ENCODE measurements at regions of chr11 and their contacts with region 1.

Region 1: DNA sequence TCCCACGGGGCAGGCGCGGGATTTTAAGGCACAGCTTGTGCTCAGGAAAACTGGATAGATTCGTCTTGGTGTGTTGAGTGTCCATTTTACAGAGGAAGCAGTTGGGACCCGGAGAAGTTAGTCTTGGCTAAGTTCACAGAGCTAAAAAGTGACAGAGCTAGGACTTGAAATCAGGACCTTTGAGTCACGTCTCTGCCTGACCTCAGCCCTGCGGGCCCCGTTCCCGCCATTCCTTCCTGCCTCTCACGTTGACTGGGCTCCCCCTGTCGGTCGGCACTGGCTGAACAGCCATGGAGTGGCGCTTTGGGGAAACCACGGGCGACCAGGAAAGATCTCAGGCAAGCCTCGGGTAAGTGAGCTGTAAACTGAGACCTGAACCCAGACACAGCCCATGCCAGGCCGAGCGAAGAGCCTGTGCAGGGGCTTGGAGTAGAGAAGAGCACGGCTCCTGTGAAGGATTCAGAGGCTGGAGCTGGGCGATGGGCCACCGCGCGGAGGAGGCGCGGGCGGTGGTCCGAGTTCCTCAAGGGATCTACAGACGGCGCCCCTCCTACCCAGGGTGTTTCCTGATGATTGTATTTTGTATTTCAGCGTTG is 54.1 kb downstream of the WNT11 start:
- DNase-seq: peak; percentile 14
- H3K4me3 ChIP-seq: peak overlapping the region; percentile 12 to 66 (median 38)
- H3K27ac ChIP-seq: no peak overlapping the region
- H3K4me1 ChIP-seq: peaks cover 3 to 16% (median 6%) of the 10 kb centered on the region in 3 donors
- H3K27me3 ChIP-seq: no peaks in the 10 kb centered on the region
- CTCF ChIP-seq: peak; percentile 88 to 96 (median 94)
- POLR2A ChIP-seq: no peak

Region 2: DNA sequence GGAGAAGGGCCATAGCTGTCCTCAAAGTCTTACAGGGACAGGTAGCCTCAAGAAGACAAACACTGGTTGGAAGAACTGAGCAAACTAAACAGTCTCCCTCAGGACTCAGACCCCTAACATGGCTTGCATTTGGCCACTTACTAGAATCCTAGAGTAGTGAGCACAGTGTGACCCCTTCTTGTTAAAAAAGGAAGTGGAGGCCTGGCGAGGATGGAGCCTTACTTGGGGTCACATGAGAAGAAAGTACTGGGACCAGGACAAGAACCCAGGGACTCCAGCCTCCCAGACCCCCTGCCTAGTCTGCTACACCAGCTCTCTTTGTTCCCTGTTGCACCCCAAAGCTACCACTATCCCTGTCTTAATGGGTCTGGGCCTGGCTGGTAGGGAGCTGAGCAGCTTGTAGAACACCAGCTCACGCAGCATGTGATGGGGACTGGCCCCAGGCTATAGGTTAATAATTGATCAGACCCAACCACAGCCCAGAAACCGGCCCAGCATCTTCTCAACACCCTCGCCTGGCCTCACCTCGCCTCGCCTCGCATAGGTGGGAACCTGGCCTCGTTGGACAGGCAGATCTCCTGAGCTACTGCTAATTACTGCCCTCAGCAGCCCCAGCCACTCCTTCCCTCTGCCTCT is 366.0 kb before region 1 on chr11:
- intact Hi-C with region 1: no loop called
- DNase-seq: no peak
- H3K4me3 ChIP-seq: no peak overlapping the region
- H3K27ac ChIP-seq: no peak overlapping the region
- H3K4me1 ChIP-seq: peaks cover 0 to 5% (median 0%) of the 10 kb centered on the region in 3 donors
- H3K27me3 ChIP-seq: no peaks in the 10 kb centered on the region
- CTCF ChIP-seq: no peak
- POLR2A ChIP-seq: no peak

Region 3: DNA sequence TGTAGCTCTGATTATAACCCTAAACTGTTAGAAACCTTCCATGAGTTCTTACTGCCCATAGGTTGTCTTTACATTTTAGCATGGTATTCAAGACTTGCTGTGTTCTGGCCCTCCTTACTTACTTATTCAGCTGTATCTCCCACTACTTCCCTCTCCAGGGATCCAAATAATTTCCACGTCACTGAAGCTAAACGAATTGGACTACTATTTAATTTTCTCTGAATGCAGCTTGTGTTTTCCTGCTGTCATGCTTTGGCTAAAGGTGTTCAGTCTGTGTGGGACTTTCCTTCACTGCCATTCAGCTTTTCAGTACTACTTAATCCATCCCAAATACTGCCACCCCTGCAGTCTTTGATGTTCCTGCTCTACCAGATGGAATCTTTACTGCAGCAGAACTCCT is 248.9 kb before region 1 on chr11:
- intact Hi-C with region 1: loop called (anchors 5 kb)
- DNase-seq: no peak
- H3K4me3 ChIP-seq: no peak overlapping the region
- H3K27ac ChIP-seq: no peak overlapping the region
- H3K4me1 ChIP-seq: peaks cover 0 to 6% (median 6%) of the 10 kb centered on the region in 3 donors
- H3K27me3 ChIP-seq: no peaks in the 10 kb centered on the region
- CTCF ChIP-seq: no peak
- POLR2A ChIP-seq: no peak

Region 4: DNA sequence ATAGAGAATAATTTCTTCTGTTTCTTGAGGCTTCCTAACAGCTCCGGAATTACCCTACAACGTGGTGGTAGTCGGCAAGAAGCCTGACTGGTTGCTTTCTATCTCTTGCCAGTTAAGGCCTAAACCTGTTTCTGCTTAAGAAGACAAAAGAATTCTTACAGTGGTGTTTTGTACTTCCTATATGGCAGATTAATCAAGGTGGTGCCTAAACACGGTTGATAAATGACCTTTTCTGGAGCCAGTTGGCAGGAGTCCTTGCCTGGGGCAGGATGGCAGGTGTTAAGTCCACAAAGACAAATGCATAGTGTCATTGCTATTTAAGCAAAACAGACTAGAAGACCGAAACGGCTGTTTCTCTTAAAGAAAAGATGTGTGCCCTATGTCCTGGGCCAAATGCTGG is 238.8 kb after region 1 on chr11:
- intact Hi-C with region 1: no loop called
- DNase-seq: no peak
- H3K4me3 ChIP-seq: no peak overlapping the region
- H3K27ac ChIP-seq: peak overlapping the region in 2 of 4 donors; percentile 18 to 30
- H3K4me1 ChIP-seq: peaks cover 0 to 17% (median 2%) of the 10 kb centered on the region in 3 donors
- H3K27me3 ChIP-seq: peaks cover 0 to 3% (median 0%) of the 10 kb centered on the region in 4 donors
- CTCF ChIP-seq: no peak
- POLR2A ChIP-seq: no peak

Measured in esophagus squamous epithelium (tissue), 5 donors.